ENCODE measurements at regions of chr1 and their contacts with region 1.

Region 1: GRCh38 chr1:241592273-241592958 is 47.8 kb downstream of the CHML start:
- DNase-seq: peak in 1 of 4 experiments; percentile 2
- ATAC-seq: no peak
- H3K4me3 ChIP-seq: no peak overlapping the region
- H3K27ac ChIP-seq: no peak overlapping the region
- H3K4me1 ChIP-seq: peaks cover 4 to 9% of the 10 kb centered on the region in 2 experiments; a peak in 4 of 5 replicates
- H3K27me3 ChIP-seq: no peaks in the 10 kb centered on the region
- CTCF ChIP-seq: no peak
- EP300 ChIP-seq: no peak
- POLR2A ChIP-seq: no peak
- RAD21 ChIP-seq: no peak

Region 2: GRCh38 chr1:240888039-240888786 is 704.2 kb before region 1 on chr1:
- CTCF ChIA-PET with region 1: no interaction called
- POLR2A ChIA-PET with region 1: no interaction called
- in situ Hi-C with region 1: no loop called
- intact Hi-C with region 1: loop called (anchors 10 kb)
- DNase-seq: peak; percentile 57 to 71 (median 68)
- ATAC-seq: peak; percentile 91
- H3K4me3 ChIP-seq: no peak overlapping the region
- H3K27ac ChIP-seq: no peak overlapping the region
- H3K4me1 ChIP-seq: no peaks in the 10 kb centered on the region
- H3K27me3 ChIP-seq: no peaks in the 10 kb centered on the region
- CTCF ChIP-seq: peak; percentile 70 to 91 (median 76)
- EP300 ChIP-seq: no peak
- POLR2A ChIP-seq: no peak
- RAD21 ChIP-seq: peak; percentile 73 to 81

Region 3: DNA sequence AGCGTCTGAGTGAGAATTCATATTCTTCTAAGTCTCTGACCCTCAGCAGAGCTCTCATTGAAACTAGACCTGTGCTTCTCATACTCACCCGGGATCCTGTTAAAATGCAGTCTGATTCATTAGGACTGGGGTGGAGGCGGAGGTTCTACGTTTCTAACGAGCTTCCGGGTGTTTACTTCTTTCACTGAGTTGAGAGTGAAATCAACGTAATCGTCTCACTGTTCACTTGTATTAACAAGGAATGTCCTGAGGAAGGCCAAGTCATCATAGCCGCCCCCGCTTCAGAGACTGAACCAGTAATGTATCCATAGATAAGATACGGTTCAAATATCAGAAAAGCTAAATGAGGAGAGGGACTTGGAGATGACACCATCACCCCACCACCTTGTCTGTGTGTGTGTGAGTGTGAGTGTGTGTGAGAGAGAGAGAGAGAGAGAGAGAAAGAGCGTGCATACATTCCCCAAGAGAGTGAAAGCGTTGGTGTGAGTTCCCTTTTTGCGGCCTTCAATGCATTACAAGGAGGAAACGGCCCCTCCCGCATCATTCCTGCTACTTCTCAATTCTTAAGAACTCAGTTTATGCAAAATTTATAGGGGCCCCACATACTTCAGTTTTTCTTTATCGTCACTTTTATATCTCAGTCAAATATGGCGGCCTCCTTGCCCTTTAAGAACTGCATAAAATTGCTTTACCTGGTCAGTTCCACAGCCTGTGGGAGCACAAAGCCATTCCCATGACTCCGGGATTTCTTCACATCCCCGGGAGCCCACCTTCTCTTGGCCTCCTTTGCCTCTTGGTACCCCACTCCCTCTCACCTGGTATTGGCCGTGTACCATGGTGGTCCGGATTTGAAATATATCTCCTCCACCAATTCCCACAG is 40.4 kb before region 1 on chr1:
- CTCF ChIA-PET with region 1: interaction called, 3 read pairs
- POLR2A ChIA-PET with region 1: no interaction called
- in situ Hi-C with region 1: loop called (anchors 5 kb)
- intact Hi-C with region 1: no loop called
- DNase-seq: peak; percentile 52 to 79 (median 60)
- ATAC-seq: peak; percentile 86
- H3K4me3 ChIP-seq: peak overlapping the region; percentile 17
- H3K27ac ChIP-seq: peak overlapping the region; percentile 77
- H3K4me1 ChIP-seq: peaks cover 0 to 9% of the 10 kb centered on the region in 2 experiments; a peak in 2 of 5 replicates
- H3K27me3 ChIP-seq: 0 out of 5 replicates have a peak, but pooled peaks cover 0 to 9% of the 10 kb centered on the region in 2 experiments
- CTCF ChIP-seq: no peak
- EP300 ChIP-seq: peak; percentile 49; the same call in 1 of the 2 replicates
- POLR2A ChIP-seq: 0 out of 2 replicates have a peak, but pooled peaks have one; percentile 32
- RAD21 ChIP-seq: peak in 1 of 2 experiments; percentile 12; a peak in 1 of 4 replicates